WTC11 (cell line): ENCODE measurements at regions of chr9 and their contacts with region 1.

Region 1: GRCh38 chr9:121321016-121321503 is 49.0 kb downstream of the STOM start:
- DNase-seq: no peak
- ATAC-seq: no peak
- H3K4me3 Mint-ChIP-seq: no peak overlapping the region
- H3K27ac Mint-ChIP-seq: no peak overlapping the region
- H3K4me1 Mint-ChIP-seq: no peaks in the 10 kb centered on the region
- H3K27me3 Mint-ChIP-seq: no peaks in the 10 kb centered on the region
- CTCF ChIP-seq: no peak

Region 2: DNA sequence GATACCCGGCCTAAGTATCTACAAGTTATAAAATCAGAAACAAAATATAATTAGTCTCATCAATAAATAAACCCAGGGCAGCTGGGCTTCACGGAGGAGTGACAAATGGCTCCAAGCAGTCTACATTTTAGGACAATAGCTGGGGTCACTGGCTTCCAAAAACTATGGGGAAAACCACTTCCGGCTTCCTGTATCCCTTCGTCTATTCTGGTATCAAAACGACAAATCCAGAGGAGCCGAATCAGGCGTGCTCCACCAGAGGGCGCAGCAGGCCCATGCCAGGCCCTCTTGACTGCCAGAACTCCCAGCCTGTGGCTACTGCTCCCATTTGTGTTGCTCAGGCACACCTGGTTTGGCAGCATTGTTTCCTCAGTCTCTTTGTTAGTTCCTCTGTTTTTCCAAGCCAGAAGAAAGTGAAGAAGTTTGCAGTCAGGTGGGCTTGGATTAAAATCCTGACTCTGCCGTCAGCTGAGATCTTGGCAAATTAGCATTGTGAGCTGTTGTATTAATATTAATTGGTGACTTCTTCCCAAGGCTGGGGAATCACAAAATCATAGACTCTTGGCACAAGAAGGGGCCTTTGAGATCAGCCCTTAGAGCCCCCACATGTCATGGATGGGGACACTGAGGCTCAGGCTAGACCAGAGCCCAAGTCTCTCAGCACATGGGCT is 107.8 kb before region 1 on chr9:
- CTCF ChIA-PET with region 1: interaction called, 15 read pairs
- POLR2A ChIA-PET with region 1: no interaction called
- DNase-seq: peak; percentile 93
- ATAC-seq: peak; percentile 98
- H3K4me3 Mint-ChIP-seq: no peak overlapping the region
- H3K27ac Mint-ChIP-seq: no peak overlapping the region
- H3K4me1 Mint-ChIP-seq: peaks cover 10% of the 10 kb centered on the region
- H3K27me3 Mint-ChIP-seq: no peaks in the 10 kb centered on the region
- CTCF ChIP-seq: peak; percentile 84

Region 3: DNA sequence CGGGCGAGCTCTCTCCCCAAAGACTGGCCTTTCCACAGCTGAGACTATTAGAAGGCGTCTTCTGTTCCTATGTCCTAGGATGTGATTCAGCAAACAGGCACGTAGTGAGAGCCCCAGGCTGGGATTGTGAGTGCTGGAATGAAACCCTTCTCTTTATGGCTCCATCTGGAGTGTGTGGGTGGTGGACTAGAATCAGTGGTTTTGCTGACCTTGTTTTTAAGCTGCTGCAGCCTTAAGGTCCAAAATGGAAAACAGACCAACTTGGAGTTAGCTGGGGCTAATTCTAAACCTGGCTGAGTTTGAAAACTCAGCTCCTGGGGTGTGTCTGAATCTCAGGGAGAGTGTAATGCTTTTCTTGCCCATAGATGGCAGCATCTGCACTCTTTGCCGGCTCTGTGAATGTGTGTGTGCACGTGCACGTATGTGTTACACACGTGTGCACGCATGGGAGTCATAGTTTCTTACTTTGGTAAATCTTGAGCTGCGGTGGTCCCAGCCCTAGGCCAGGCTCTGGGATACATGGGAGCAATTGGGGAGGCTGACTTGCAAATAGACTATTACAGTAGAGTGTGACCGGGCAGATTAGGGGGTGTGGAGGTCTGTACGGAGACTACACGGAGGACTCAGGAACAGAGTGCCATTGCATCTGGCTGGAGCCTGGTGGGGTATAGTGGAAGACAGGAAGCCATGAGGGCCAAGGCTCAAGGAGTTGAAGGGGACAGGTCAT is 42.4 kb before region 1 on chr9:
- CTCF ChIA-PET with region 1: interaction called, 14 read pairs
- POLR2A ChIA-PET with region 1: no interaction called
- DNase-seq: peak; percentile 43
- ATAC-seq: peak; percentile 85
- H3K4me3 Mint-ChIP-seq: no peak overlapping the region
- H3K27ac Mint-ChIP-seq: no peak overlapping the region
- H3K4me1 Mint-ChIP-seq: peaks cover 22% of the 10 kb centered on the region
- H3K27me3 Mint-ChIP-seq: peaks cover 52% of the 10 kb centered on the region
- CTCF ChIP-seq: peak; percentile 65

Region 4: GRCh38 chr9:121299467-121300234 is 21.4 kb before region 1 on chr9:
- CTCF ChIA-PET with region 1: interaction called, 15 read pairs
- POLR2A ChIA-PET with region 1: no interaction called
- DNase-seq: peak; percentile 23
- ATAC-seq: peak; percentile 56
- H3K4me3 Mint-ChIP-seq: peak overlapping the region; percentile 74
- H3K27ac Mint-ChIP-seq: no peak overlapping the region
- H3K4me1 Mint-ChIP-seq: peaks cover 23% of the 10 kb centered on the region
- H3K27me3 Mint-ChIP-seq: peaks cover 21% of the 10 kb centered on the region
- CTCF ChIP-seq: no peak

Region 5: DNA sequence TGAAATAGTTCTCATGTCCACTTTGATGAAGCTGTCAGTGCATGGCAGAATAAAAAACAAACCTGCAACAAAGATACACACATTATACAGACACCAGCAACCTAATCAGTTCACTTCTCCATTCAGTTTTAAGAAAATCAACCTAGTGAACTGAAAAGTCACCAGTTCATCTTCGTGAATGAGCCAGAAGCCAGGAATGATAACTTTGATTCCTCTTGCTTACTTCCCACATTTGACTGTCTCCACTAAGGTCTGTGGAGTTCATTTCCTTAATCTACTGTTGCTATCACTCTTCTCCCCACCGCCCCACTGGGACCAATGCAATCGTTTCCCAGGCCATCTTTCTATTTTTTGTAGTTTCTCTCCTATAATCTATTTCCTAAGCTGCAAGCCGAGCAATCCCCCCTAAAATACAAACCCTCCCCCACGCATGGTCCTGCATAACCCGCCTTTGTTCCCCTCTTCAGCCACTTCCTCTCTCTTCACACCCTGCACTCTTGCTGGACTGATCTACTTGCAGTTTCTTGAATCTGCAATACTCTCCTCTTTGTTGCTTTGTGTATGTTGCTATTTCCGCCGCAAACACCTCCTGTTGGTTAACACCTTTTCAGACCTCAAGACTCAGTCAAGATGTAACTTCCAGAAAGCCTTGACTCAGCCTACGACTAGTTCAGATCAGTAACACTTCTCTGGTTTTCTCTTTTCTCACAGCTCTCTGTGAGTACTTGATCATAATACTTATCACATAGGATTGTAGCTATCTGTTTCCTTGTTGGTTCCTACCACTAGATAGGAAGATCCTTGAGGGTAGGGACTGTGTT is 32.4 kb after region 1 on chr9:
- CTCF ChIA-PET with region 1: interaction called, 11 read pairs
- POLR2A ChIA-PET with region 1: no interaction called
- DNase-seq: no peak
- ATAC-seq: peak; percentile 41; the same call in 1 of the 2 replicates
- H3K4me3 Mint-ChIP-seq: no peak overlapping the region
- H3K27ac Mint-ChIP-seq: peak overlapping the region; percentile 14; the same call in 1 of the 2 replicates
- H3K4me1 Mint-ChIP-seq: peaks cover 13% of the 10 kb centered on the region
- H3K27me3 Mint-ChIP-seq: no peaks in the 10 kb centered on the region
- CTCF ChIP-seq: no peak

Region 6: DNA sequence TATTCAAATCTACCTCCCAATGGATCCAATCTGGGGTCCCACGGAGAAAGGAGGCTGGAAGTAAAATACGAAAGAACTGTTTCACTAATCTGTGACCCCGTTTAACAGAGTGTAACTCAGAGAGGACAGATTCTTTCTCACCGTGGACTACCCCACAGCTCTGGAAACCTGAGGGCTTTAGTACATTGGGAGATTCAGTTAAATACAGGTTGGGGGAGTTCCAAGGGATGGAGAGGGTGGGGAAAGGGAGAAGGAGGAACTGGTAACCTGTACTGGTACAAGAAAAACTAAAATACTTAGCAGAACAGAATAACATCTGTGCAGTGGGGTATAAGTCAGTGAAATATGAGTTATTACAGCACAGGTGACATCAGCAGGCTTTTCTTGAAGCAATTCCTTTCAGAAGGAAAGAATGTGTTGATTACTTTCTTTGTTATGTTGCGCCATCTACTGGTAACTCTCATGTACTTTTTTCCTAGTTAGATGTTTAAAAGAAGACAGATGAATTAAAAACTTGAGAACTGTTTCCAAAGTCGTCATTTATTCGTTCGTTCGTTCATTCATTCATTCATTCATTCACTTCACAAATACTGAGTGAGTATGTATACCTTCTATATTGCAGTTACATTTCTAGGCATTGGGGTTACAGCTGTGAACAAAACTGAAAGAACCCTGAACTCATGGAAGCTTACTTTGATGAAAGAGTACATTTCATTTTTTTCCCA is 79.0 kb after region 1 on chr9:
- CTCF ChIA-PET with region 1: interaction called, 42 read pairs
- POLR2A ChIA-PET with region 1: interaction called, 3 read pairs
- DNase-seq: no peak
- ATAC-seq: peak; percentile 47
- H3K4me3 Mint-ChIP-seq: no peak overlapping the region
- H3K27ac Mint-ChIP-seq: no peak overlapping the region
- H3K4me1 Mint-ChIP-seq: peaks cover 9% of the 10 kb centered on the region
- H3K27me3 Mint-ChIP-seq: no peaks in the 10 kb centered on the region
- CTCF ChIP-seq: peak; percentile 74

Region 7: DNA sequence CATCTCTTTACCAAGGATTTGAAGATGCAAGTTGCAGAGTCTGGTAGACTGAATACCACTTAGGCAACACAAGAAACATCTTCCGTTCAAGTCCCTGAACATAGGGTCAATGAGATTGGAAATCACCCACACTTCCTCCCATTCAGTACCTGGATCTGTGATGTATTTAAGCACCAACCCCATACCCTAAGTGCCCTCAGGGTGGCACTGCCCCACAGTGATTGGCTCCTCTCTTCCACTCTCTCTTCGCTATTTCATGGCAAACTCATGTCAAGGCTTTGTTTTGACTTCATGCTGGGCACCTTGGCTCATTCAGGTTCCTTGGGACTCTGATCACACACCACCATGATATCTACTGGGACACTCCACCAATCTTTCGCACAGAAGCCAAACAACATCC is 124.9 kb after region 1 on chr9:
- CTCF ChIA-PET with region 1: no interaction called
- POLR2A ChIA-PET with region 1: no interaction called
- DNase-seq: peak; percentile 22
- ATAC-seq: peak; percentile 71
- H3K4me3 Mint-ChIP-seq: no peak overlapping the region
- H3K27ac Mint-ChIP-seq: no peak overlapping the region
- H3K4me1 Mint-ChIP-seq: no peaks in the 10 kb centered on the region
- H3K27me3 Mint-ChIP-seq: peaks cover 3% of the 10 kb centered on the region
- CTCF ChIP-seq: no peak